MCF 10A (cell line): ENCODE measurements at regions of chr10 and their contacts with region 1.

Region 1: DNA sequence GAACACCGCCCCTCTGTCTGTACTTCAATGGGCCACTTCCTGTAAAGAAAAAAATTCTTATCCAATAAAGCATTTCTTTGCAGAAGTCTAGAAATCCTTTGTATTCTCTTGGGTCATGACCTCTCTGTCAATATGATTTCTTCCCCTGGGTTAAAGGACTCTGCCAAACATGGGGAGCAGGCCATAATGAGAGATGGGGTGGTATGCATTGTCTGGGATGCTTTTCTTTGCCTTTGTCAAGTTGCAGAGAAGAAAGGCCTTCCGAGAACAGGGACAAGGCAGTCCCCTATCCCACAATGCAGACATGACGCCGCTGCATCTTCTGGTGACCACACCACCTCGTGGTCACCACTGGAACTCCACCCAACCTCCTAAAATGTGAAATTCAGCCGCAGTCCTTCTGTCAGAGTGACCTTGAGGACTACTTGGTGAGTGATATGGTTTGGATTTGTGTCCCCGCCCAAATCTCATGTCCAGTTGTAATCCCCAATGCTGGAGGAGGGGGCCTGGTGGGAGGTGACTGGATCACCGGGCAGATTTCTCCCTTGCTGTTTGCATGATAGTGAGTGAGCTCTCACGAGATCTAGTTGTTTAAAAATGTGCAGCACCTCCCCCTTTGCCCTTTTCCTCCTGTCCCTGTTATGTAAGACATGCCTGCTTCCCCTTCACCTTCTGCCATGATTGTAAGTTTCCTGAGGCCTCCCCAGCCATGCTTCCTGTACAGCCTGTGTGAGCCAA is 15.2 kb upstream of the FRMPD2 start:
- DNase-seq: peak; percentile 58
- H3K4me3 Mint-ChIP-seq: no peak overlapping the region
- H3K27ac Mint-ChIP-seq: no peak overlapping the region
- H3K4me1 Mint-ChIP-seq: no peaks in the 10 kb centered on the region
- H3K27me3 Mint-ChIP-seq: peaks cover 22% of the 10 kb centered on the region
- CTCF ChIP-seq: peak; percentile 71

Region 2: DNA sequence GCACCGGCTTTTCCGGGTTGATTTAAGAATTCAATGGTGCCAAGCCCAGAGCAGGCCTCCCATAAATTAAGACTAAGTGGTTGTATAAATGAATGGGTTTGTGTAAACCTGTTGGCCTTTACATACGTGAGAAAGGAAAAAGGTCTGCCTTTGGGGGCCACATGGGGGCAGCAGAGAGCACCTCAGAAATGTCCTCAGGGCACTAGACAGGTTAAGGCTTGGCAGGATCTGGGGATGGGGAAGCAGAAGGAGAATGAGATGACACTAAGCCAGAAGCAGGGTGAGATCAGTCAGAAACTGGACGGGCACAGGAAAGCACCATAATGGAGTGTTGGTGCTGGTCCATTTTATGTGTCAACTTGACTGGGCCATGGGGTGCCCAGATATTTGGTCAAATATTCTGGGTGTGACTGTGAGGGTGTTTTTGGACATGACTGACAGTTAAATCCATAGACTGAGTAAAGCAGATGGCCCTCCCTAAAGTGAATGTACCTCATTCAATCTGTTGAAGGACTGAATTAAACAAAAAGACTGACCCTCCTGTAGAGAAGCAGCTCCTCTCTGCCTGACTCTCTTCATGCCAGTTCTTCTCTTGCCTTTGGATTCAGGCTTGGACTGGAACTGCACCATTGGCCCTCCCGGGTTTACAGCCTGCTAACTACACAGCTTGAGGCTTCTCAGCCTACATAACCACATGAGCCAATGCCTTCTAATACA is 74.0 kb before region 1 on chr10:
- CTCF ChIA-PET with region 1: interaction called, 4 read pairs
- POLR2A ChIA-PET with region 1: no interaction called
- intact Hi-C with region 1: loop called (anchors 1 kb)
- DNase-seq: peak; percentile 79
- H3K4me3 Mint-ChIP-seq: no peak overlapping the region
- H3K27ac Mint-ChIP-seq: no peak overlapping the region
- H3K4me1 Mint-ChIP-seq: peaks cover 12% of the 10 kb centered on the region
- H3K27me3 Mint-ChIP-seq: peaks cover 51% of the 10 kb centered on the region
- CTCF ChIP-seq: peak; percentile 70

Region 3: GRCh38 chr10:48251525-48252353 is 37.9 kb before region 1 on chr10:
- CTCF ChIA-PET with region 1: interaction called, 10 read pairs
- POLR2A ChIA-PET with region 1: no interaction called
- intact Hi-C with region 1: no loop called
- DNase-seq: peak; percentile 57
- H3K4me3 Mint-ChIP-seq: no peak overlapping the region
- H3K27ac Mint-ChIP-seq: peak overlapping the region; percentile 80
- H3K4me1 Mint-ChIP-seq: peaks cover 26% of the 10 kb centered on the region
- H3K27me3 Mint-ChIP-seq: no peaks in the 10 kb centered on the region
- CTCF ChIP-seq: no peak

Region 4: DNA sequence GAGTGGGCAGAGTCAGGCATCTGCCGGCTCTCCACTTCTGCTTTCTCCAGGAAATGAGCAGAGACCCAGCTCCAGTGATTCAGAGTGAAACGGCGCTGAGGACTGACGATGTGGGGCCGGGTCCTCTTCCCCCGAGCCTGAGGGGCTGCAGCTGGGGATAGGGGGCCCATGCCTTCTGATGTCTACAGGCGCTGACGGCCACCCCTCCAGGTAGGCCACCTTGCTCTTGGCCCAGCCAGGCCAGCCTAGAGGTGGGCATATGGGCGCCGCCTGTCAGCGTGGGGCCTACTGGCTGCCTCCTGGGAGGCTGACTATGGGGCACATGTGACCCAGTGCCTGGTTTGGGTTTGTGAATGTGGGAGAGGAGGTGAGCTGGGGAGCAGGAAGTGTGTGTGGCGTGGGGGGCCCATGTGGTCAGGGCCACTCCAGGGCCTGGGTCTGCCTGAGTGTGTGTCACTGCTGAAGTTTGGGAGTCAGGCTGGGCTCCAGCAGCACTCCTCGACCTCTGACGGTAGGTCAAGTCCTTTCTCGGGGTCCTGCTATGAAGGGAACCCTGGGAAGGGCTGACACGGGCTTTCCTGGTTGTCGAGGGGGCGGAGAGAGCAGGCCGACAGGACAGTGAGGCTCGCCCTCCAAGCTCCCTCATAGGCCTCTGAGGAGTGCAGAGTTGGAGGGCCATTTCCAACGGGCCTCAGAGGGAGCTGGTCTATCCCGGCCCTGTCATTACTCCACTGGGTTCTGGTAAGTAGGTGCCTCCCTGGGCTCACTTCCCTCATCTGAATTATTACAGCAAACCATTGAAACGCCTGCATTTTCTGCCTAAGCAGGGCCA is 395.3 kb after region 1 on chr10 and contains the start of gene WDFY4:
- CTCF ChIA-PET with region 1: no interaction called
- POLR2A ChIA-PET with region 1: no interaction called
- intact Hi-C with region 1: no loop called
- DNase-seq: no peak
- H3K4me3 Mint-ChIP-seq: no peak within 1 kb of the TSS
- H3K27ac Mint-ChIP-seq: peak within 1 kb of the TSS; percentile 65
- H3K4me1 Mint-ChIP-seq: no peaks in the 10 kb centered on the region
- H3K27me3 Mint-ChIP-seq: peaks cover 29% of the 10 kb centered on the region
- CTCF ChIP-seq: no peak
- total RNA-seq, gene WDFY4: not detected in 2 replicates

Region 5: DNA sequence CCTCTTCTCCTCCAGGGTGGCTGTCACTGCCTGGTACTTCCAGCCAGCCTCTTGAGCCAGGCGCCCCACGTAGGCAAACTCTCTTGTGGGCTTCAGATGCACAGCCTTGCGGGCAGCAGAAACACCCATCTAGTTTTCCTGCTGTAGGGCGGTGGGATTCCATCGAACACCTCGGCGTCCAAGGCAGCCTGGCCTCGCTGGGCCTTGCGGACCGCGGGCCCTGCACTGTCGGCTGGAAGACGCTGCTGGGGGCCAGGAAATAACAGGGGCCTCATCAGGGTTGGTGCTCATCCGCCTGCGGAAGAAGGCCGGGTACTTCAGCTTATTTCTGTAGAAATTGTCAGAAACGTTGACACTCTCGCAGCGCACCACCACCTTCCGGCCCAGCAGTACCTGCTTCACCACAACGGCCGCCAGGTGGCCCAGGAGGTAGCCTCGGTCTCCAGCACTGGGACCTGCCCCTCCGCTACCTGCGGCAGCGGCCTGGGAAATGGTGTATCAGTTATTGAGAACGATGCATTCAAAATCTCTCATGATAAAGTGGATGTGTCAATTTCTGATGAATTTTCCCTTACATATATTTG is 456.1 kb after region 1 on chr10:
- CTCF ChIA-PET with region 1: no interaction called
- POLR2A ChIA-PET with region 1: no interaction called
- intact Hi-C with region 1: no loop called
- DNase-seq: no peak
- H3K4me3 Mint-ChIP-seq: no peak overlapping the region
- H3K27ac Mint-ChIP-seq: no peak overlapping the region
- H3K4me1 Mint-ChIP-seq: no peaks in the 10 kb centered on the region
- H3K27me3 Mint-ChIP-seq: peaks cover 25% of the 10 kb centered on the region
- CTCF ChIP-seq: no peak